ENCODE measurements at regions of chr3 and their contacts with region 1.

Region 1: GRCh38 chr3:30258426-30259392 is 347.7 kb upstream of the TGFBR2 start:
- DNase-seq: peak; percentile 100
- ATAC-seq: peak; percentile 99
- H3K4me3 ChIP-seq: peak overlapping the region in 1 of 3 experiments; percentile 26; a peak in 1 of 6 replicates
- H3K27ac ChIP-seq: peak overlapping the region; percentile 96
- H3K4me1 ChIP-seq: peaks cover 77% of the 10 kb centered on the region
- H3K27me3 ChIP-seq: no peaks in the 10 kb centered on the region
- CTCF ChIP-seq: peak; percentile 24
- EP300 ChIP-seq: peak; percentile 95 to 99
- POLR2A ChIP-seq: no peak
- RAD21 ChIP-seq: peak; percentile 56; the same call in 1 of the 2 replicates

Region 2: GRCh38 chr3:30073622-30074021 is 185.1 kb before region 1 on chr3:
- CTCF ChIA-PET with region 1: no interaction called
- POLR2A ChIA-PET with region 1: no interaction called
- in situ Hi-C with region 1: no loop called
- intact Hi-C with region 1: no loop called
- DNase-seq: no peak
- ATAC-seq: no peak
- H3K4me3 ChIP-seq: no peak overlapping the region
- H3K27ac ChIP-seq: no peak overlapping the region
- H3K4me1 ChIP-seq: no peaks in the 10 kb centered on the region
- H3K27me3 ChIP-seq: no peaks in the 10 kb centered on the region; a peak in 1 of 5 replicates
- CTCF ChIP-seq: no peak
- EP300 ChIP-seq: no peak
- POLR2A ChIP-seq: no peak
- RAD21 ChIP-seq: no peak

Region 3: GRCh38 chr3:30084971-30085403 is 173.7 kb before region 1 on chr3:
- CTCF ChIA-PET with region 1: no interaction called
- POLR2A ChIA-PET with region 1: no interaction called
- in situ Hi-C with region 1: no loop called
- intact Hi-C with region 1: no loop called
- DNase-seq: no peak
- ATAC-seq: peak; percentile 60
- H3K4me3 ChIP-seq: no peak overlapping the region
- H3K27ac ChIP-seq: no peak overlapping the region
- H3K4me1 ChIP-seq: peaks cover 39% of the 10 kb centered on the region
- H3K27me3 ChIP-seq: no peaks in the 10 kb centered on the region
- CTCF ChIP-seq: no peak
- EP300 ChIP-seq: no peak
- POLR2A ChIP-seq: no peak
- RAD21 ChIP-seq: no peak

Region 4: DNA sequence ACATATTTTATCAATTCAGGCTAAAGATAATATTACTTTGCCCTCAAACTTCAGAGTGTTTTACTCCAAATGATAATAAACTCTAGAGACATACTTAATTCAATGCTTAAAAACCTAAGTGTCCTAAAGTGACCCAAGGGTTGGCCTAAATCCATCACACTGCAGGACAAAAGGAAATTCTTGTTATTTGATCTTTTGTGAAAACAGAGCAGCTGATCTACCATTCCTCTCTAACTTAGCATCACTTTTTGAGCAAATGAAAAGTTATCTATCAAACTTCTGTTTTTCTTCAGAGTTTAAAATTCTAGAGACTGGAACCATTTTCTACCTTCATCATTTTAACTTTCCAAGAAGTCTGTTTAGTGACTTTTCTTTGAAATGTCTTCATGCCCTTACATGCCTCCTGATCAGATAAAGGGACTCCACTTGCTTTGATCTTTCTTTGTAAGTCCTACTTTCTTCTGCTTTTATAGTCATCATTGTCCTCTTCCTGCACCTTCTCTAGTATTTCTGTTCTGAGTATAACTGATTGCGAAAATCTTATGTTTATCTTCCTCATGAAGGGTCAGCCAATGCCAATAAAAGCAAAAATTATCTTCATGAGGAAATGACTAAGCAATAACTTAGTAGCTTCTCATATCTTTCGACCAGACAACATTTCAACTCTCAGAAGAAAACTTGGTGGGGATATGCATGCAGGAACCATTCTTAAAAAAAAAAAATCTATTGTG is 31.0 kb before region 1 on chr3:
- CTCF ChIA-PET with region 1: no interaction called
- POLR2A ChIA-PET with region 1: interaction called, 14 read pairs
- in situ Hi-C with region 1: no loop called
- intact Hi-C with region 1: loop called (anchors 2 kb)
- DNase-seq: peak; percentile 85
- ATAC-seq: peak; percentile 36; the same call in 2 of the 3 replicates
- H3K4me3 ChIP-seq: no peak overlapping the region
- H3K27ac ChIP-seq: peak overlapping the region; percentile 55
- H3K4me1 ChIP-seq: peaks cover 40% of the 10 kb centered on the region
- H3K27me3 ChIP-seq: no peaks in the 10 kb centered on the region
- CTCF ChIP-seq: no peak
- EP300 ChIP-seq: peak in 1 of 2 experiments; percentile 93; a peak in 2 of 4 replicates
- POLR2A ChIP-seq: no peak
- RAD21 ChIP-seq: no peak

Region 5: GRCh38 chr3:30286007-30286669 is 27.4 kb after region 1 on chr3:
- CTCF ChIA-PET with region 1: no interaction called
- POLR2A ChIA-PET with region 1: interaction called, 30 read pairs
- in situ Hi-C with region 1: no loop called
- intact Hi-C with region 1: loop called (anchors 5 kb)
- DNase-seq: no peak
- ATAC-seq: no peak
- H3K4me3 ChIP-seq: no peak overlapping the region
- H3K27ac ChIP-seq: no peak overlapping the region
- H3K4me1 ChIP-seq: peaks cover 32% of the 10 kb centered on the region
- H3K27me3 ChIP-seq: no peaks in the 10 kb centered on the region
- CTCF ChIP-seq: no peak
- EP300 ChIP-seq: no peak
- POLR2A ChIP-seq: no peak
- RAD21 ChIP-seq: no peak

Region 6: DNA sequence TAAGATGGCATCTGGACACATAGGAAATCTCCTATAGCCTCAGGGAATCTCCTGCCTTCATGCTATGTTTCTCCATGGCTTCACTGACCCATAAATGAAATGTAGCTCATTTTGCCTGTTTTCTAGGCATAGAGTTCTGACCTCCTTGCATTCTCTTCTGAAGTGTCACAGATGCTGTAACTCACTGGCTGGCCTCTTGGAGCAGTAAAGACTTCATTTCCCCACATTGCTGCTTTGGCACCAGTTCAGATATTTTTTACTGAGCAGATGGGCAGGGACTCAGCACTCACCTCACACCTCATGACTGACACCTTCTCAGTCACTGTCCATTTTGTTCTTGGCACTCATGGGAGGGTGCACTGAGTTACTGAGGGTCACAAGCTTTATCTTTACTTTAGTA is 61.0 kb after region 1 on chr3:
- CTCF ChIA-PET with region 1: no interaction called
- POLR2A ChIA-PET with region 1: interaction called, 8 read pairs
- in situ Hi-C with region 1: no loop called
- intact Hi-C with region 1: loop called (anchors 2 kb)
- DNase-seq: peak; percentile 71
- ATAC-seq: peak; percentile 93
- H3K4me3 ChIP-seq: no peak overlapping the region
- H3K27ac ChIP-seq: no peak overlapping the region
- H3K4me1 ChIP-seq: peaks cover 23% of the 10 kb centered on the region
- H3K27me3 ChIP-seq: no peaks in the 10 kb centered on the region
- CTCF ChIP-seq: peak; percentile 66
- EP300 ChIP-seq: no peak
- POLR2A ChIP-seq: no peak
- RAD21 ChIP-seq: peak; percentile 68

Region 7: GRCh38 chr3:30475038-30475808 is 216.5 kb after region 1 on chr3:
- CTCF ChIA-PET with region 1: no interaction called
- POLR2A ChIA-PET with region 1: no interaction called
- in situ Hi-C with region 1: no loop called
- intact Hi-C with region 1: loop called (anchors 5 kb)
- DNase-seq: no peak
- ATAC-seq: no peak
- H3K4me3 ChIP-seq: no peak overlapping the region
- H3K27ac ChIP-seq: no peak overlapping the region
- H3K4me1 ChIP-seq: peaks cover 47% of the 10 kb centered on the region
- H3K27me3 ChIP-seq: no peaks in the 10 kb centered on the region
- CTCF ChIP-seq: no peak
- EP300 ChIP-seq: no peak
- POLR2A ChIP-seq: no peak
- RAD21 ChIP-seq: no peak

Region 8: DNA sequence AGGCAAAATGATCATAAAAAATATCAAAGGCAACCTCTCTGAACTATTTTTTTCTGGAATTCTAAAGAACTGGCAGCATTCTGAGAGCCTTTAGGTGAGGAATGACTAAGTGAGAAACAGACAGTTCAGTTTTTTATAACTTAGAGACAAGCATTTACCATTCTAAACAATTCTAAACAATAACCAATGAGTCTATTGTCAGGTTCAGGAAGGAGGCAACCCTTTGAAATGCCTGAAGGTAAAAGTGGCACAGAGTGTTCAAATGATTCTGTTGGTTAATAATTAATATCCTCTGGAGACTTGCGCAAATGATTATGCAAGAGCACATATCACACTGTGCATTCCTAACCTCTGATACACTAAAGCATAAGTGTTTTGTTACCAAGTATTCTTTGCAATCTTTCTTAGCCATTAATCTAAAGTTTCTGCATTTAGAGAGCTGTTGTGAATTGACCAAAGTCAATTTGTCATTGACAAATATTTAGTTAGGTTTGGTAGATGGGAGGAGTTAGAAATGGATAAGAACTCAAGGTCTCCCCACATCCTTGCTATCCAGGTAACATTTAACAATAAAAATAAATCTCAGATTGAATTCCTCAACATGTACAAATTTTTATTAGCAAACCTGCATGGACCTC is 338.5 kb after region 1 on chr3:
- CTCF ChIA-PET with region 1: no interaction called
- POLR2A ChIA-PET with region 1: interaction called, 10 read pairs
- in situ Hi-C with region 1: loop called (anchors 10 kb)
- intact Hi-C with region 1: loop called (anchors 2 kb)
- DNase-seq: peak; percentile 99
- ATAC-seq: peak; percentile 97
- H3K4me3 ChIP-seq: no peak overlapping the region; a peak in 1 of 6 replicates
- H3K27ac ChIP-seq: peak overlapping the region; percentile 98
- H3K4me1 ChIP-seq: peaks cover 74% of the 10 kb centered on the region
- H3K27me3 ChIP-seq: no peaks in the 10 kb centered on the region
- CTCF ChIP-seq: no peak
- EP300 ChIP-seq: peak; percentile 94 to 100
- POLR2A ChIP-seq: no peak
- RAD21 ChIP-seq: no peak

Measured in HepG2 (cell line).